ENCODE measurements at regions of chr1 and their contacts with region 1.

Region 1: GRCh38 chr1:1013105-1013921 is at the start of gene ISG15:
- DNase-seq: peak; percentile 77
- ATAC-seq: peak; percentile 94
- H3K4me3 Mint-ChIP-seq: peak within 1 kb of the TSS; percentile 98
- H3K27ac Mint-ChIP-seq: peak within 1 kb of the TSS; percentile 97
- H3K4me1 Mint-ChIP-seq: peaks cover 30% of the 10 kb centered on the region
- H3K27me3 Mint-ChIP-seq: peaks cover 5% of the 10 kb centered on the region
- CTCF ChIP-seq: no peak
- total RNA-seq, gene ISG15: 25.8 and 28.9 TPM in 2 replicates

Region 2: DNA sequence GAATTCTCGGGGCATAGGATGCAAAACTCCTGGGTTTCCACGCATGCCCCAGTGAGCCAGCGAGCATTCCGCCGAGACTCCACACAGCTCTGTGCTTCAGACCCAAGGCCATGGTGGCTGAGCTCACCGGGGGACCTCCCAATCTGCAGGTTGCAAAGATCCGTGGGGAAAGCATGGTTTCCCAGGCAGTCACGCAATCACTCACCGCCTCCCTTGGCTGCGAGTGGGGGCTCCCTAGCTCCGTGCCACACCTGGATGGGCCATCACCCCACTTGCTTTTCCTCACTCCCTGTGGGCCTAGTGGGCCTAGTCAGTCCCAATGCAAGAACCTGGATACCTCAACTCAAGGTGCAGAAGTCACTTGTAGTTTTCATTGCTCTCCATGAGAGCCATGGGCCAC is 126.6 kb before region 1 on chr1:
- CTCF ChIA-PET with region 1: no interaction called
- POLR2A ChIA-PET with region 1: no interaction called
- intact Hi-C with region 1: no loop called
- DNase-seq: no peak
- ATAC-seq: no peak
- H3K4me3 Mint-ChIP-seq: no peak overlapping the region
- H3K27ac Mint-ChIP-seq: no peak overlapping the region
- H3K4me1 Mint-ChIP-seq: no peaks in the 10 kb centered on the region
- H3K27me3 Mint-ChIP-seq: peaks cover 57% of the 10 kb centered on the region
- CTCF ChIP-seq: no peak

Region 3: GRCh38 chr1:1046243-1046642 is 32.9 kb after region 1 on chr1:
- CTCF ChIA-PET with region 1: no interaction called
- POLR2A ChIA-PET with region 1: no interaction called
- intact Hi-C with region 1: no loop called
- DNase-seq: no peak
- ATAC-seq: no peak
- H3K4me3 Mint-ChIP-seq: no peak overlapping the region
- H3K27ac Mint-ChIP-seq: no peak overlapping the region
- H3K4me1 Mint-ChIP-seq: peaks cover 3% of the 10 kb centered on the region
- H3K27me3 Mint-ChIP-seq: no peaks in the 10 kb centered on the region
- CTCF ChIP-seq: no peak

Region 4: DNA sequence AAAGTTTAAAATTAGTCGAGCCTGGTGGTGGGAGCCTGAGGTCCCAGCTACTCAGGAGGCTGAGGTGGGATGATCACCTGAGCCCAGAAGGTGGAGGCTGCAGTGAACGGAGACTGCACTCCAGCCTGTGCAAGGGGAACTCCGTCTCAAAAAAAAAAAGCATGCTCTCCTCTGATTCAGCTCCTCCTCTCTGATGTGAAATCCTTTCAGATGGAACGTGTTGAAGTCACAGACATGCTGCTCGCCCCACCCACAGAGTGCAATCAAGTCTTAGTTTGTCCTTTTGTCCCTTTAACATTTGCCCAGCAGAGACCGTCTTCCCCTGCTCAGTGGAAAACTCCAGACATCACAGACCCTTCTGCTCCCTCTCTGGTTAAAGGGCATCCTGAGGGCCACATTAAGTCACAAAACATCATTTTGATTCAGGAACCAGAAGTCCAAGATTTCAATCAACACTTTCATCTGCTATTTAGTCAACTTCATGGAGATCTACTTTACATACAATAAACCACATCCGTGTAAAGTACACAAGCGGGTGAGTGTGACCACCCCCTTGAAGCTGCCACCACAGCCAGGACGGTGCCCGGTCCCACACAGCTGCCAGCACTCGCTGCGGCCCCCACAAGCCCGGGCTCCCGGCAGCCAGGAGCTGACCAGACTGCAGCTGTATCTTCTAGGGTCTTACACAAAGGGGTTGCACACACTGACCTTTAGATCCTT is 79.7 kb after region 1 on chr1:
- CTCF ChIA-PET with region 1: no interaction called
- POLR2A ChIA-PET with region 1: interaction called, 16 read pairs
- intact Hi-C with region 1: no loop called
- DNase-seq: no peak
- ATAC-seq: peak; percentile 67
- H3K4me3 Mint-ChIP-seq: no peak overlapping the region
- H3K27ac Mint-ChIP-seq: peak overlapping the region; percentile 10
- H3K4me1 Mint-ChIP-seq: peaks cover 6% of the 10 kb centered on the region
- H3K27me3 Mint-ChIP-seq: no peaks in the 10 kb centered on the region
- CTCF ChIP-seq: no peak

Region 5: DNA sequence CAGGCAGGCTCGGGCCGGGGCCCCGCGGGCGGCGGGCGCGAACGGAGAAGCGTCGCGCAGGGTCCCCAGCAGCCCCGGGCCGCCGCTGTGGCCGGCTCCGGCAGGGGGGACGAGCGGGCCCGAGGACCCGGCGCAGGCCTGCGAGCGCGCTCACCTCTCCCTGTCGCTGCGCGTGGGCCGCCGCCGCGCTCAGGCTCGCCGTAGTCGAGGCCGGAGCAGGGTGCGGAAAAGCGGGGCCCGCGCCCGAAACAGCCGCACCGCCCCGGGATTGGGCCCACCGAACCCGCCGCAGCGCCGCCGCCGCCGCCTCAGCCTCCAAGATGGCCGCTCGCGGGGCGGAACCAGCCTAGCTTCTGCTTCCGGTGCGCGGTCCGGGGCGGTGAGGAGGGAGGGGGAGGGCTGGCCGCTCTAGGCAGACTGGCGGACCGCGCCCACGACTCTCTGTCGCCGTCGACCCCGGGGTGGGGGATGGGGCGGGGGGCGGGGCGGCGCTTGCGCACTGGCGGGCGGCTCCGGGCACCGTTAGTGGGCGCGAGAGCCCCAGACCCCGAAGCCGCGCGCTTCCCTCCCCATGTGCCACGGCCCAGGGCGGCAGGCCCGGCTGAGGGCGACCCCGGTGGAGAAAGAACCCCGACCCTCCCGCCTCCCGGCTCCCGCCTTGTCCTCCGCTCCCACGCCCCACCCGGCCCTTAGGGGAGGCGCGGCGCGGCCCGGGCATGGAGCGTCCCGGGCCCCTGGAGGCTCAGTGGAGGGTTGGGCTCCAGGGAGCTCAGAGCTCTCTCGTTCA is 260.4 kb after region 1 on chr1 and contains the start of gene UBE2J2:
- CTCF ChIA-PET with region 1: no interaction called
- POLR2A ChIA-PET with region 1: interaction called, 11 read pairs
- intact Hi-C with region 1: loop called (anchors 5 kb)
- DNase-seq: peak; percentile 82
- ATAC-seq: peak; percentile 96
- H3K4me3 Mint-ChIP-seq: peak within 1 kb of the TSS; percentile 87
- H3K27ac Mint-ChIP-seq: peak within 1 kb of the TSS; percentile 70
- H3K4me1 Mint-ChIP-seq: peaks cover 38% of the 10 kb centered on the region
- H3K27me3 Mint-ChIP-seq: no peaks in the 10 kb centered on the region
- CTCF ChIP-seq: no peak
- total RNA-seq, gene UBE2J2: 79.2 and 89.9 TPM in 2 replicates